ENCODE measurements at regions of chr17 and their contacts with region 1.

Region 1: DNA sequence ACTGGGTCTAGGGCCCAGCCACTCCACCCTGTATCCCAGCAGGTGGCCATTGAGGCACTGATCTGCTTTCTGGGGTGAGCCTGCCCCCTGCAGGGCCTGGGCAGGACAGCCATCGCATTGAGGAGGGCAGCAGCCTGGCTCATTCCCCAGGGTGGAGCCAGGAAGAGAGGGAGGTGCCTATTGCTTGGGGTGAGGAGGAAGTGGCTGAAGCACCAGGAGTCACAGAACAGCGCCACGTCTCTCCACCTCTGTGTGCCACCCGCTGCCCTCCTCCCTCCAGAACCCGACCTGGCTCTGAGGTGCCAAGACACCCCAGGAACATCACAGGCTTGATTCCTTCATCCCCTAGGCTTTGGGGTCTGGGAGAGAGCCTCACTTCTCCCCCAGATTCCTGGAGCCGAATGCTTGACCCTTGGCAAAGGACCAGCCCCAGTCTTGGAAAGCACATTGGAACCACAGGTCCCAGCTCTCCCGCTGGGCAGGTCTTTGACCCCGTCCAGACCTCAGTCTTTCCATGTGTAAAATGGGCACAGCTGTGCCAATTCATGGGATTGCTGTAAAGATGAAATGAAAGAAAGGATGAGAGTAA is 7.2 kb upstream of the KRT36 start:
- DNase-seq: peak; percentile 68 to 84
- H3K4me3 ChIP-seq: no peak overlapping the region
- H3K27ac ChIP-seq: no peak overlapping the region
- H3K4me1 ChIP-seq: peaks cover 0 to 19% (median 12%) of the 10 kb centered on the region in 4 experiments; a peak in 6 of 7 replicates
- H3K27me3 ChIP-seq: no peaks in the 10 kb centered on the region
- CTCF ChIP-seq: peak; percentile 82 to 94 (median 88)
- EP300 ChIP-seq: no peak
- POLR2A ChIP-seq: no peak
- RAD21 ChIP-seq: peak; percentile 80 to 92

Region 2: DNA sequence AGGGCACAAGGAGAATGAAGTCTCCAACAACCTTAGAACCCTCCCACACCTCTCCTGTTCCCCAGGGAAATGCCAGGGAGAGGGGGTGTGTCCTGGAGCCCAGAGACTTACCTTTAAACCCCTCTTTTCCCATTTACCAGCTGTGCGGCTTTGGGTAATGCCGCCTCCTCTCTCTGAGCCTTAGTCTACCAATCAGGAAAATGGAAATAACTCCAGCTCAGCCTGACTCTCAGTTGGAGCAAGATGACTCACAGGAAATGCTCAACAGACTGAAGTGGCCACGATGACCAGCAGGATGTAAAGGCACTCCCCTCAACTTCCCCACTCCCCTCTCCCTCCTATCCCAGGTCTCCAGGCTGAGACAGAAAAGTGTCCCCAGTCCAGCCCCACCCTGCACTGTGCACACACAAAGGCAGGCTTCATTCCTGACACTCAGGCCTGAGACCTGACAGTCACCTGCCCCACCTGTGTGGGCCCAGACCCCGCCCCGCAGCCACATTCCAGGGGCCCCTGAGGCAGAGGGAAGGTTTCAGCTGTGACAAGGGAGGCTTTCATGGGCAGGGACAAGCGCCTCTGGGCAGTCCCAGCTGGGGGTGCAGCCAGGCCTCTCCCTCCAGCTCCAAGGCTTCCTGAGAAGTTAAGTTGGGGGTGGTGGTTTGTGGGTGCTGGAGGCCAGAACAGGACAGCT is 24.8 kb after region 1 on chr17:
- CTCF ChIA-PET with region 1: interaction called, 13 read pairs
- POLR2A ChIA-PET with region 1: interaction called, 32 read pairs
- DNase-seq: no peak
- H3K4me3 ChIP-seq: no peak overlapping the region
- H3K27ac ChIP-seq: no peak overlapping the region
- H3K4me1 ChIP-seq: peaks cover 0 to 18% (median 11%) of the 10 kb centered on the region in 4 experiments; a peak in 6 of 7 replicates
- H3K27me3 ChIP-seq: no peaks in the 10 kb centered on the region
- CTCF ChIP-seq: no peak
- EP300 ChIP-seq: no peak
- POLR2A ChIP-seq: no peak
- RAD21 ChIP-seq: no peak

Region 3: DNA sequence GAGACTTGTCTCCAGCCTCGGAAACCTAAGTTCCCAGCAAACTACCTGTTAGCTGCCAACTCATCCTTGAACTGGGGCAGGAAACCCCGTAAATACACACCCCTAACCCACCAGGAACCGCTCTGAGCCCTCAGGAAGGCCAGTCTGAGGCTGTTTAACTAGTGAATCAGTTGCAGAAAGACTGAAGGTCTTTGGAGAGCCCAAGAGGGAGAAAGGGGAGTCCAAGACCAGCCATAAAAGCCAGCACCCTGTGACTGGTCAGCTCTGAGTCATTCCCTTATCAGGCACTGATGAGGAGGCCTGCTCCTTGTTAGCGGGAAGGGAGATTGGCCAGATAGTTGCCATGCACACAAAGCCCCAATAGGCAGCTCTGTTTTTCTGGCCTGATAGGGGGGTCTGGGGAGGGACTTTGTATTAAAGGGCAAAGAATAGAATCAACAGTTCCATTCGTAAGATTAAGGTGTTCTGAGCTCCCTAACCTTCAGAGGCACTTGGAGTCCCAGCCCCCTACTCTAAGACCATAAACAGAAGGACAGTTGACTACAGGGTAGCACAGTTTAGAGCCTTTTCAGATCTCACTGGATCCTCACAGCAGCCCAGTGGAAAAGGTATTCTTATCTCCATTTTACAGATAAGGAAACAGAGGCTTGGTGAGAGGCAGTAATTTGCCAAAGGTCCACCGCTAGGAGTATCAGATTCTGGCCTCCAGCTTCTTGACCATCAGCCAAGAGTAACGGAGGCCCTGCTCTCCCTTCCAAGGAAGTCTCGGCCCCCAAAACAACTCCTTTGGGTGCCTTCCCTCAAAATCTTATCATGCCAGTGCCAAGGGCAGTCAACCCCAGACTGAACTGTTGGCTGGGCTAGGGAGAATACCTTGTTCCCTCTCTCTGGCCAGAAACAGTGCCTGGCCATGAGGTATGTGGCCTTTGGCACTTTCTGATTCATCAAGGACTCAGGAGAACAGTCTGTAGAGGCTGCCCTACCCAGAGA is 33.4 kb after region 1 on chr17:
- CTCF ChIA-PET with region 1: interaction called, 13 read pairs
- POLR2A ChIA-PET with region 1: interaction called, 32 read pairs
- DNase-seq: no peak
- H3K4me3 ChIP-seq: no peak overlapping the region
- H3K27ac ChIP-seq: no peak overlapping the region
- H3K4me1 ChIP-seq: peaks cover 2 to 19% (median 10%) of the 10 kb centered on the region in 4 experiments
- H3K27me3 ChIP-seq: no peaks in the 10 kb centered on the region
- CTCF ChIP-seq: no peak
- EP300 ChIP-seq: no peak
- POLR2A ChIP-seq: no peak
- RAD21 ChIP-seq: no peak